Caco-2 (cell line): ENCODE measurements at regions of chr20 and their contacts with region 1.

Region 1: GRCh38 chr20:48921151-48921898 is at the start of gene ARFGEF2:
- DNase-seq: peak; percentile 97 to 100
- H3K4me3 ChIP-seq: peak within 1 kb of the TSS; percentile 86
- H3K4me3 Mint-ChIP-seq: peak within 1 kb of the TSS; percentile 84
- H3K27ac Mint-ChIP-seq: peak within 1 kb of the TSS; percentile 99
- H3K4me1 ChIP-seq: peaks cover 32% of the 10 kb centered on the region
- H3K4me1 Mint-ChIP-seq: peaks cover 30% of the 10 kb centered on the region
- H3K27me3 ChIP-seq: no peaks in the 10 kb centered on the region
- H3K27me3 Mint-ChIP-seq: no peaks in the 10 kb centered on the region
- CTCF ChIP-seq: peak; percentile 17 to 28
- total RNA-seq, gene ARFGEF2: 78.8 and 83.2 TPM in 2 replicates

Region 2: GRCh38 chr20:48945851-48946514 is 24.7 kb after region 1 on chr20:
- CTCF ChIA-PET with region 1: no interaction called
- POLR2A ChIA-PET with region 1: interaction called, 6 read pairs
- intact Hi-C with region 1: loop called (anchors 2 kb)
- DNase-seq: peak; percentile 86 to 90
- H3K4me3 ChIP-seq: no peak overlapping the region
- H3K4me3 Mint-ChIP-seq: no peak overlapping the region
- H3K27ac Mint-ChIP-seq: peak overlapping the region; percentile 59
- H3K4me1 ChIP-seq: peaks cover 12% of the 10 kb centered on the region
- H3K4me1 Mint-ChIP-seq: peaks cover 17% of the 10 kb centered on the region
- H3K27me3 ChIP-seq: no peaks in the 10 kb centered on the region
- H3K27me3 Mint-ChIP-seq: no peaks in the 10 kb centered on the region
- CTCF ChIP-seq: no peak